ENCODE measurements at regions of chr15 and their contacts with region 1.

Region 1: GRCh38 chr15:75625542-75626347 is at the start of gene SNUPN:
- DNase-seq: peak; percentile 92 to 93
- H3K4me3 ChIP-seq: peak within 1 kb of the TSS; percentile 75 to 97
- H3K27ac ChIP-seq: peak within 1 kb of the TSS; percentile 94 to 95
- H3K4me1 ChIP-seq: peaks cover 0 to under 1% of the 10 kb centered on the region in 2 donors
- H3K27me3 ChIP-seq: no peaks in the 10 kb centered on the region
- CTCF ChIP-seq: peak in 1 of 4 experiments; percentile 28
- POLR2A ChIP-seq: peak in 1 of 2 donors; percentile 48
- total RNA-seq, gene SNUPN: 2.0 to 35.8 (median 29.1) TPM

Region 2: GRCh38 chr15:75367913-75368688 is 257.6 kb before region 1 on chr15 and contains the start of gene MAN2C1:
- intact Hi-C with region 1: loop called (anchors 10 kb)
- DNase-seq: peak; percentile 92 to 94
- H3K4me3 ChIP-seq: peak within 1 kb of the TSS; percentile 85 to 98
- H3K27ac ChIP-seq: peak within 1 kb of the TSS; percentile 92 to 96
- H3K4me1 ChIP-seq: no peaks in the 10 kb centered on the region
- H3K27me3 ChIP-seq: no peaks in the 10 kb centered on the region
- CTCF ChIP-seq: peak; percentile 71 to 85 (median 77)
- POLR2A ChIP-seq: peak; percentile 48 to 71
- total RNA-seq, gene MAN2C1: 154 to 330 (median 180) TPM

Region 3: GRCh38 chr15:75517233-75517632 is 108.5 kb before region 1 on chr15:
- intact Hi-C with region 1: no loop called
- DNase-seq: no peak
- H3K4me3 ChIP-seq: no peak overlapping the region
- H3K27ac ChIP-seq: no peak overlapping the region
- H3K4me1 ChIP-seq: no peaks in the 10 kb centered on the region
- H3K27me3 ChIP-seq: no peaks in the 10 kb centered on the region
- CTCF ChIP-seq: no peak
- POLR2A ChIP-seq: no peak

Region 4: GRCh38 chr15:75672646-75673425 is 47.1 kb after region 1 on chr15:
- intact Hi-C with region 1: no loop called
- DNase-seq: peak in 1 of 2 donors; percentile 57
- H3K4me3 ChIP-seq: no peak overlapping the region
- H3K27ac ChIP-seq: peak overlapping the region; percentile 82 to 88
- H3K4me1 ChIP-seq: peaks cover 4 to 21% of the 10 kb centered on the region in 2 donors
- H3K27me3 ChIP-seq: no peaks in the 10 kb centered on the region
- CTCF ChIP-seq: no peak
- POLR2A ChIP-seq: no peak

Measured in uterus (tissue), 4 donors.